ENCODE measurements at regions of chr17 and their contacts with region 1.

Region 1: DNA sequence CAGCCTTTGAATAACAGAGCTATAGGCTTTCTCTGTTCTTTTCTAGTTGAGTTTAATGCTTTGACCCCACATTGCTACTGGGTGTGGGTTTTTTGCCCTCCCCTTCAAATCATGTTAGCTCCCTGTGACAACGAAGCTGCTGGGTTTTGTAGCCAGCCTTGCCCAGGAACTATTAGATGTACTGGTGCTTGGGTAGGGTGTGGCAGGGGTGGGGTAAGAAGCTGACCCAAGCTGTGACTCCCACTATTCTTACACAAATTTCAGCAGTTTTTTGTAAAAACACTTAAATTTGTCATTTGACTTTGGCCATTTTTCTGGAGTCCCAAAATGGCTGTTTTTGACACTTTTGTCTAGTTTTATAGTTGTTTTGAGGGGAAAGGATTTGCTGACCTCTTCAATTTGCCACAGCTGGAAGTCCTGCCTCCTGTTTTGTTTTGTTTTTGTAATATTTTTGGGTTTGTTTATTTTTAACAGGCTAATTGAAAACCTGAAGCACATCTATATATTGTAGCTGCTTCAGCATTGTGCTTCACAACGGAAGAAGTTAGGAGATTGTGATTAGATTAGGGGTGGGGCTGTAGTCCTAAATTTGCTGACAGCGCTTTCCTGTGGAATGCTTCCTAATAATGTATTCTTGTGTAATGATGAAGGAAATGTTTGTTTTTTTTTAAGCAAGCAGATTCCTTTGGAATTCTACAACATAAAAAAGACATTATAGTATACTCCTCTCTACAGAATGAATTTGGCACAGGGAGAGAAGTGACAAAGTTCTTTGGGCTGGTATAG is 69.9 kb downstream of the NLK start:
- DNase-seq: no peak
- H3K4me3 ChIP-seq: no peak overlapping the region
- H3K27ac ChIP-seq: no peak overlapping the region
- H3K4me1 ChIP-seq: no peaks in the 10 kb centered on the region
- H3K27me3 ChIP-seq: no peaks in the 10 kb centered on the region
- CTCF ChIP-seq: no peak

Region 2: DNA sequence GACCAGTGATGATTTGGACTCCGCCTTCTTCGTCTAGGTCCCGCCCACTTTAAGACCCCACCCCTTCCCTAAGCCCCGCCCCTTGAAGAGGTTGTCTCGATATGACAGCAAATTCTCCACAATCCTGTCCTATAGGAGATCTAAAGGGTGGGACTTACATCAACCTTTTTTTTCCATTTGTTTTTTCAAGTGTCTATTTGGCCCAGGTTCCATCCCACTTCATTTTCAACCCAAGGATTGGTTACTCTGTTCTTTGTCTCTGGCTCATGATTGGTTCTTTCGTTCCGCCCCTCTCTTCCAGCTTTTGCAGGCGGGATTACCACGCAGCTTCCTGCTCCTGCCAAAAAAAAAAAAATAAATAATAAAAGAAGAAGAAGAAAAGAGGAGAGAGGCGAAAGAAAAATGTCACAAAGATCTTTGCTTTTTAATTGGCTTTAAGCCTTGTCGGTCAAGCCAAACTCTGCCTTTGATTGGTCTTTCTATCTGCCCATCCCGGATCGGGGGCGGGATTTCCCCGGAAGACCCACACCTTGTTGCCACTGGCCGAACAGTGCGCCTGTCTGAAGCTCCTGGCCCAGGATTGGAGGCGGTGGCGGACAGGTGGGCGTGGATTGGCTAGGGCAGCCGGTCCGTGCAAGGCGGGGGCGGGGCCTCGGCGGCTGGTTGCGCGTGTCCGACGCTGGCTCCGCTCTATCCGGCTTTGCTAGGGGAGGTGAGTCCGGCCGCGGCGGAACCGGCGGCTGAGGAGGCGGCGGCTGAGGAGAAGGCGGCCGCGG is 71.2 kb before region 1 on chr17:
- intact Hi-C with region 1: loop called (anchors 10 kb)
- DNase-seq: peak; percentile 99
- H3K4me3 ChIP-seq: peak overlapping the region; percentile 84
- H3K27ac ChIP-seq: peak overlapping the region; percentile 84
- H3K4me1 ChIP-seq: peaks cover 4% of the 10 kb centered on the region
- H3K27me3 ChIP-seq: no peaks in the 10 kb centered on the region
- CTCF ChIP-seq: no peak

Region 3: DNA sequence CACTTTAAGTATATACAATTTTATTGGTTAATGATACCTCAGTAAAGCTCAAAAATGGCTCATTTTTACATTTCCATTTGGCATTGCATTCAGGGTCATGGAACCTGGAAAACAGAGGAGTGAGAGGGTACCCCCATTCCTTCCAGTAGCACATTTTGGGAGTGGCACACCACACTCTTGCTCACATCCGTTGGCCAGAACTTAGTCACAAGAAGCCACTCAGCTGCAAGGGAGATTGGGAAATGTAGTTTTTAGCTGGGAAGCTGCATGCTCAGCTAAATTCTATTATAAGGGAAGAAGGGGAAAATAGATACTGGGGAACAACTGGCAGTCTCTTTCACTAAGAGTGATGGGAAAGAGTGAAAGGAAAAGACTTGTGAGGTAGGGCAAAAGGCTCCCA is 104.1 kb after region 1 on chr17:
- intact Hi-C with region 1: no loop called
- DNase-seq: no peak
- H3K4me3 ChIP-seq: no peak overlapping the region
- H3K27ac ChIP-seq: no peak overlapping the region
- H3K4me1 ChIP-seq: no peaks in the 10 kb centered on the region
- H3K27me3 ChIP-seq: no peaks in the 10 kb centered on the region
- CTCF ChIP-seq: no peak

Measured in colonic mucosa (tissue), 4 donors.